Right lobe of liver (tissue), 6 donors: ENCODE measurements at regions of chr3 and their contacts with region 1.

Region 1: DNA sequence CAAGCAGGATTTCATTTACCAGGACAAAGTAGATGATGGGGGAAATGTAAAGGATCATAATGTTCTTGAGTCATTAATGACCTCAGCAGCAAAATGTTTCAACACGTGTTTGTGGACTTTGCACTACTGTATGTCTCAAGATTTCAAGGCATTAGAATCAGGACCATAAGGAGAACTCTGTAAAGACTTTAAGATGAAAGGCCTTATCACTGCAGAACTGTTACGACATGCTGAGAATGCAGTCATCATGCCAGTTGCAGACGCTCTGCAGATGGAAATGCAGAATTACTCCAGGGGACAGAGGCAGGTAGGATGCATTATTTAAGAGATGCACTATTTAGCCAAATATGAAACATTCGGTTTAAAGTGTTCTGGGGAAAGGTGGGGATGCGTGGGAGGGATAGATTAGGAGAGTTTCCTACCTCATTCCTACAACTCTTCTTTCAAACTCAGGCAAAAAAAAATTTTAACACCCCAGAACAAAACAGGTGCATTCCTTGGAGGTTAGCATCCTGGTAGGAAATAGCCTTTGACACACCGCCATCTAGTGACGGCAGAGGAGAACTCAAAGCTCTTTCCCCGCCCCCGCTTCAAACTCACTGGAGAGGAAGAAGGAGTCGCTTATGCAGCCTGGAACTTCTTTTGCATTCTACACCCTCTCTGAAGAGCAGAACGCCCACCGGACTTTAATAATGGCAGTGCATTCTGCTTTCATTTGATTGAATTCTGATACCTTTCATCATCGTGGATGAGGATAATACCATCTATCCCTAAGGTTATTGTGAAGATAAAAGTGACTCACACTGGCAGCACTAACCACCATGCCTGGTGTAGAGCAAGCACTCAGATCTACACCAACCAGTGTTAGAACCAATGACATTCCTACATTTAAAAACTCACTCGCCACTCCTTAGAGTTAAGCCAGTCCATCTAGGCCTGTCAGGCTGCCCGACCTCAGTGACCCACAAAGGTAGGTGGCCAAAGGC is 43.1 kb upstream of the TOPAZ1 start:
- DNase-seq: peak; percentile 47 to 70 (median 63)
- ATAC-seq: peak; percentile 92 to 98 (median 95)
- H3K4me3 ChIP-seq: no peak overlapping the region
- H3K27ac ChIP-seq: no peak overlapping the region
- H3K4me1 ChIP-seq: no peaks in the 10 kb centered on the region
- H3K27me3 ChIP-seq: no peaks in the 10 kb centered on the region
- CTCF ChIP-seq: peak; percentile 78 to 84 (median 82)
- POLR2A ChIP-seq: no peak

Region 2: GRCh38 chr3:43540624-43541023 is 658.0 kb before region 1 on chr3:
- intact Hi-C with region 1: loop called in 1 of 2 experiments (anchors 10 kb)
- DNase-seq: no peak
- ATAC-seq: no peak
- H3K4me3 ChIP-seq: no peak overlapping the region
- H3K27ac ChIP-seq: no peak overlapping the region
- H3K4me1 ChIP-seq: no peaks in the 10 kb centered on the region
- H3K27me3 ChIP-seq: no peaks in the 10 kb centered on the region
- CTCF ChIP-seq: no peak
- POLR2A ChIP-seq: no peak

Region 3: GRCh38 chr3:43689766-43690399 is 508.7 kb before region 1 on chr3:
- intact Hi-C with region 1: loop called in 1 of 2 experiments (anchors 5 kb)
- DNase-seq: no peak
- ATAC-seq: peak; percentile 49 to 58 (median 53)
- H3K4me3 ChIP-seq: peak overlapping the region; percentile 77 to 89 (median 85)
- H3K27ac ChIP-seq: peak overlapping the region; percentile 90 to 96 (median 92)
- H3K4me1 ChIP-seq: peaks cover 0 to 29% (median 2%) of the 10 kb centered on the region in 4 donors
- H3K27me3 ChIP-seq: no peaks in the 10 kb centered on the region
- CTCF ChIP-seq: no peak
- POLR2A ChIP-seq: no peak